Tibial artery (tissue), 4 donors: ENCODE measurements at regions of chr21 and their contacts with region 1.

Region 1: DNA sequence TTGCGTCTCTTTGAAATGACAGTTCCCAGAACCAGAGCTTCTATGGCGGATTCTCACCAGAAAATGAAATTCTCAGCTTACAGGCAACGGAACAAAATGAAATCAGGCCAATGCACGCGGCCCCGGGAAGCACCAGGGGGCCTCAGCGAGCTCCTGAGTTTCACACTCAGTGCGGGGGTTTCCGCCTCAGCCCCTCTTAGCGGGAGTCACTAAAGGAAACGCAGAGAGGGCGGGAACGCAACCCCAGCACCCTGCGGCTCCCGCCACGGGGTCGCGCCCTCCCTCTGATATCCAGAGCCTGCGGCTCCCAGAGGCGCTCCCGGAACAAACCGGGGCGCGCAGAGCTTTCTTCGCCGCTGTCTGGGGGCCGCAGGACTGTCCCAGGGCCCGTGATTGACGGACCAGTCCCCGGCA is 7.9 kb upstream of the COL6A1 start:
- DNase-seq: peak; percentile 84 to 91
- H3K4me3 ChIP-seq: peak overlapping the region; percentile 48 to 59
- H3K27ac ChIP-seq: peak overlapping the region; percentile 93 to 95
- H3K4me1 ChIP-seq: peaks cover 8 to 66% (median 58%) of the 10 kb centered on the region in 4 donors
- H3K27me3 ChIP-seq: no peaks in the 10 kb centered on the region
- CTCF ChIP-seq: peak; percentile 72 to 75

Region 2: DNA sequence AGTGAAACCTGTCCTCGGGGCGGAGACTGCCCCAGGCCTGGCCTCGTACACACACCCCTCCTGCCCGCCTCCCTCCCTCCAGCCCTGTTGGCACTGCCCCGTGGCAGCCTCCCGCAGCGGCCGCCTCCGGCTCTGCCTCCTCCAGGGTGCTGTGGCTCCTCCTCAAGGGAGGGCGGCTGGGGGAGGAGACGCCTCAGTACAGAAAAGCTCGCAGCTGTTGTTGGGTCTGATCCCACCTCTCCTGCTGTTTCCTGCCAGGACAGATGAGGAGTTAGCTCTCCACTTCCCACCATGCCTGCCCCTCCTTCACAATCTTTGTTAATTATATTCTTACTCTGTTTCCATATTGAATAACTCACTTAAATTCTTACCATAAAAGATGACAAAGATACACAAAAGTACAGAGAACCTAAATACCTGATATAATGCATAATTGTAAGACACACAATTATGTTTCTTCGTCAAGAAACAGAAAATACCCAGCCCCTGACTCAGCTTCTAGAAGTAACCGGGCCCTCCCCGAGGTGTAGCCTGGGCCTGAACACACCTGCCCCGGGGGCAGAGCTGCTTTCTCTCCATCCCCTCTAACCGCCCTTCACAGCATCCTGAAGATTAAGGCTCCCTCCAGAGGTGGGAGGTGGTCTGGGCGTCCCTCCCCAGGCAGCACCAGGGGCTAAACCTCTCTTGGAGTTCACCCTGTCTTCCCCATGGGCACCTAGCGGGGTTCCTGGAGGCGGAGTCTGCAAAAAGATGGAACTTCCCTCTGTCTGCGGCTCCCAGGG is 22.7 kb before region 1 on chr21:
- intact Hi-C with region 1: no loop called
- DNase-seq: peak; percentile 57 to 89
- H3K4me3 ChIP-seq: peak overlapping the region in 1 of 2 donors; percentile 26
- H3K27ac ChIP-seq: peak overlapping the region; percentile 57 to 74
- H3K4me1 ChIP-seq: peaks cover 0 to 62% (median 44%) of the 10 kb centered on the region in 4 donors
- H3K27me3 ChIP-seq: no peaks in the 10 kb centered on the region
- CTCF ChIP-seq: no peak

Region 3: DNA sequence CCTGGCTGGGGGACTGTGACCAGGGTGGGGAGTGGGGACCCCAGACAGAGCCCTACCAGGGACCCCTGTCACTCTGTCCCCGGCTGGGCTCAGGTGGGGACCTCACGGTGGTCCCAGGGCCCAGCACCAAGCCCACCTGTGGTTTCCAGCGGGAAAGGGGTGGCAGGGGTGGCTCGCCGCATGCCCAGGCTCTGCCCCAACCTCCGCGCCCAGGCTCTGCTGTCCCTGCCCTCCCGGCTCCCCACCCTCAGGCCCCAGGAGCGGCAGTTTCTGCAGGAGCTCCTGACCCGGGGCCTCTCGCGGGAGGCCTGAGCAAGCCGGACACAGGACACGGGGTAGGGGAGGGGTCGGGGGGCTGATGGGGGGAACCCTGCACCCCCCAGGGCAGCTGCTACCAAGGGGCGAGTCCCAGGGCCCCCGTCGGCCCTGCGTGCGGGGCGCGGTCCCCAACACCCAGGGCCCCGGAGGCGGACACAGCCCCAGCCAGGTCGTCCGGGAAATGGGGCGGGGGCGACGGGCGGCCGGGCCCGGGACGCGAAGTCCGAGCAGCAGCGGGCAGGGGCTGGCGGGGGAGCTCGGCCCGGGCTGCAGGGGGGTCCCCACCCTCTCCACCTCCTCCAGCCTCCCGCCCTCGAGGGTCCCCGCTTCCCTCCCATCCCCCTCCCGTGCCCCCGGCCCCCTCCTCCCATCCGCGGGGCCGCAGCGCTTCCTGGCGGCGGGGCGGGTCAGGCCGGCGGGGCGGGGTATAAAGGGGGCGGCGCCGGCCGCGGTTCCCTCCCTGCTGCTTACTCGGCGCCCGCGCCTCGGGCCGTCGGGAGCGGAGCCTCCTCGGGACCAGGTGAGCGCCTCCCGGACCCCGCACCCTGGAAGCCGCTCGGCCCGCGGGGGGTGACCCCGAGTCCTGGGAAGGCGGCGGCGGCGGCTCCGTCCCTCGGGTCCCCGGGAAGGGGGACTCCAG is 123.9 kb after region 1 on chr21 and contains the start of gene COL6A2:
- intact Hi-C with region 1: loop called (anchors 2 kb)
- DNase-seq: peak; percentile 62 to 88
- H3K4me3 ChIP-seq: peak within 1 kb of the TSS; percentile 82 to 97
- H3K27ac ChIP-seq: peak within 1 kb of the TSS; percentile 95 to 100
- H3K4me1 ChIP-seq: peaks cover 4 to 47% (median 30%) of the 10 kb centered on the region in 4 donors
- H3K27me3 ChIP-seq: no peaks in the 10 kb centered on the region
- CTCF ChIP-seq: peak in 1 of 2 experiments; percentile 47

Region 4: GRCh38 chr21:46228345-46229051 is 254.8 kb after region 1 on chr21 and contains the start of gene LSS:
- intact Hi-C with region 1: loop called (anchors 5 kb)
- DNase-seq: peak; percentile 97 to 99
- H3K4me3 ChIP-seq: peak within 1 kb of the TSS; percentile 99 to 100
- H3K27ac ChIP-seq: peak within 1 kb of the TSS; percentile 94 to 96
- H3K4me1 ChIP-seq: peaks cover 0 to 39% (median 31%) of the 10 kb centered on the region in 4 donors
- H3K27me3 ChIP-seq: no peaks in the 10 kb centered on the region
- CTCF ChIP-seq: peak in 1 of 2 experiments; percentile 8